CD14-positive monocyte (primary cell): ENCODE measurements at regions of chr20 and their contacts with region 1.

Region 1: DNA sequence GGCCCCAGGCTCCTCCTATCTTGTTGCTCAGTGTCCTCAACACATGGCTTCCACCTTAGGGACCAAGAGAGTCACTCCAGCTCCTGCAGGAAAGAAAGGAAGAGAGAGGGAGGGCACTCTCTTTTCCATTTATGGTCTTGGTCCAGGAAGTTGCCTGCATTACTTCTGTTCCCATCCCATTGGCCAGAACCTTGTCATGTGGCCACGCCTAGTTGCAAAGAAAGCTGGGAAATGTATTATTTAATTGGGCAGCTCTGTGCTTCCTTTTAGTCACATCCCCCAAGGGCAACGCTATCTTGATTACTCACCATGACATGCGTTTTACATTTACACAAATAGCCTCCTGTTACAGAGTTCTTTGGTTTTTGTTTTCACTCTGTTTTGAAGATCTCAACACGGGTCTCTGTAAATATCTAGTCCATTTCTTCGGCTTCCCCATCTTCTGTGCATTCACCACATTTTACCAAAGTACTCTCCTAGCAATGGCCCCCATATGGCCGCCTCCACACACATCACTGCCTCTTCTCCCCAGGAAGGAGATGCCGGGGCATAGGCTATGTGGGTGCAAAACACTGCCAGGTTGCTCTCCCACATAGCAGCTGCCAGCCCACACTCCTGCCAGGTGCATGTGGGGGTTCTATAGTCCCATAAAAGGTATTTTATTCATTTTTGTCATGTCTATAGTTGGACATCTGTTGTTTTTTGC is 35.7 kb upstream of the ZMYND8 start:
- DNase-seq: peak; percentile 86 to 94 (median 92)
- H3K4me3 ChIP-seq: peak overlapping the region in 1 of 3 experiments; percentile 33
- H3K4me3 Mint-ChIP-seq: peak overlapping the region in 1 of 2 donors; percentile 61
- H3K27ac ChIP-seq: peak overlapping the region; percentile 96
- H3K27ac Mint-ChIP-seq: peak overlapping the region; percentile 89 to 99 (median 95)
- H3K4me1 ChIP-seq: peaks cover 24 to 28% of the 10 kb centered on the region in 2 donors
- H3K4me1 Mint-ChIP-seq: peaks cover 26% of the 10 kb centered on the region
- H3K27me3 ChIP-seq: no peaks in the 10 kb centered on the region
- H3K27me3 Mint-ChIP-seq: peaks cover 0 to 4% (median 4%) of the 10 kb centered on the region in 3 donors
- CTCF ChIP-seq: no peak

Region 2: GRCh38 chr20:47317127-47317895 is 74.9 kb before region 1 on chr20:
- intact Hi-C with region 1: loop called in 1 of 2 experiments (anchors 10 kb)
- DNase-seq: peak; percentile 70 to 85 (median 80)
- H3K4me3 ChIP-seq: peak overlapping the region in 1 of 3 experiments; percentile 55
- H3K4me3 Mint-ChIP-seq: peak overlapping the region in 1 of 2 donors; percentile 37
- H3K27ac ChIP-seq: peak overlapping the region; percentile 77 to 85
- H3K27ac Mint-ChIP-seq: peak overlapping the region; percentile 85 to 96 (median 94)
- H3K4me1 ChIP-seq: peaks cover 45 to 57% of the 10 kb centered on the region in 2 donors
- H3K4me1 Mint-ChIP-seq: peaks cover 59% of the 10 kb centered on the region
- H3K27me3 ChIP-seq: no peaks in the 10 kb centered on the region
- H3K27me3 Mint-ChIP-seq: no peaks in the 10 kb centered on the region
- CTCF ChIP-seq: no peak

Region 3: DNA sequence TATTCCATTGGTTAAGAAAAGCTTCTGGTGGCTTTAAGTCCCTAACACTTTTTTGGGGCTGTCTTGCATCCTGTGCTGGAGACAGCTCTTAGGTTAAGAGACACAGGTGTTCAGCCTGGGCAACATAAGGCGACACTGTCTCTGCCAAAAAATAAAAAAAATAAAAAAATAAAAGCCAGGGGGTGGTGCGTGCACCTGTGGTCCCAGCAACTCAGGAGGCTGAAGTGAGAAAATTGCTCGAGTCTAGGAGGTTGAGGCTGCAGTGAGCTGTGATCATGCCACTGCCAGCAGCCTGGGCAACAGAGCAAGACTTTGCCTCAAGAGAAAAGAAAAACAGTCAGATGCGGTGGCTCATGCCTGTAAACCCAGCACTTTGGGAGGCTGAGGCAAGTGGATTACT is 19.9 kb after region 1 on chr20:
- intact Hi-C with region 1: loop called in 1 of 2 experiments (anchors 2 kb)
- DNase-seq: no peak
- H3K4me3 ChIP-seq: no peak overlapping the region
- H3K4me3 Mint-ChIP-seq: no peak overlapping the region
- H3K27ac ChIP-seq: no peak overlapping the region
- H3K27ac Mint-ChIP-seq: peak overlapping the region in 3 of 7 donors; percentile 7 to 80 (median 56)
- H3K4me1 ChIP-seq: peaks cover 35 to 40% of the 10 kb centered on the region in 2 donors
- H3K4me1 Mint-ChIP-seq: peaks cover 44% of the 10 kb centered on the region
- H3K27me3 ChIP-seq: no peaks in the 10 kb centered on the region
- H3K27me3 Mint-ChIP-seq: peaks cover 0 to 1% (median 0%) of the 10 kb centered on the region in 3 donors
- CTCF ChIP-seq: no peak

Region 4: GRCh38 chr20:47610247-47610944 is 218.2 kb after region 1 on chr20:
- intact Hi-C with region 1: loop called in 1 of 2 experiments (anchors 10 kb)
- DNase-seq: peak; percentile 39 to 69 (median 69)
- H3K4me3 ChIP-seq: no peak overlapping the region
- H3K4me3 Mint-ChIP-seq: no peak overlapping the region
- H3K27ac ChIP-seq: peak overlapping the region; percentile 12 to 20
- H3K27ac Mint-ChIP-seq: peak overlapping the region in 4 of 7 donors; percentile 43 to 86 (median 53)
- H3K4me1 ChIP-seq: peaks cover 7 to 20% of the 10 kb centered on the region in 2 donors
- H3K4me1 Mint-ChIP-seq: peaks cover 24% of the 10 kb centered on the region
- H3K27me3 ChIP-seq: no peaks in the 10 kb centered on the region
- H3K27me3 Mint-ChIP-seq: peaks cover 0 to 1% (median 0%) of the 10 kb centered on the region in 3 donors
- CTCF ChIP-seq: no peak